ENCODE measurements at regions of chr12 and their contacts with region 1.

Region 1: DNA sequence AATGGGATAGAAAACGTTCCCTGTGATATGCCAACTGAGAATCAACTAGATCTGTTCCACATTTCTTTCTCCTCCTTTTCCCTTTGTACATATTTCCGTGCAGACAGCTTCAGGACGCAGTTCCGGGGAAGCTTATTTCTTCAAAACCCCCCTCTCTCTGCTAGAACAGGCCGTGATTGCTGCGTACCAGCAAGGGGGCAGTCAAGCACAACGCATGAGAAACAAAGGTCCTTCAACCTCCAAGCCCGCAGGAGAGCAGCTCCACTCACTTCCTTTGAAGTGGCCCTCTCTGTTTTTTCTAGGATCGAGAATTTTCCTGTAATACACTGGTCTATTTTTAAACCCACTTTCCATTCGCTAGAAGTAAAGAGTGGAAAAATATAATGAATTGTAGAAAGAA is 80.8 kb downstream of the ZNF664 start:
- DNase-seq: peak in 8 of 10 donors; percentile 38 to 74 (median 59)
- H3K4me3 ChIP-seq: peak overlapping the region in 10 of 59 donors; percentile 0 to 26 (median 4)
- H3K27ac ChIP-seq: peak overlapping the region in 2 of 59 donors; percentile 0 to 31
- H3K27me3 ChIP-seq: no peaks in the 10 kb centered on the region
- CTCF ChIP-seq: peak; percentile 16 to 92 (median 75)

Region 2: DNA sequence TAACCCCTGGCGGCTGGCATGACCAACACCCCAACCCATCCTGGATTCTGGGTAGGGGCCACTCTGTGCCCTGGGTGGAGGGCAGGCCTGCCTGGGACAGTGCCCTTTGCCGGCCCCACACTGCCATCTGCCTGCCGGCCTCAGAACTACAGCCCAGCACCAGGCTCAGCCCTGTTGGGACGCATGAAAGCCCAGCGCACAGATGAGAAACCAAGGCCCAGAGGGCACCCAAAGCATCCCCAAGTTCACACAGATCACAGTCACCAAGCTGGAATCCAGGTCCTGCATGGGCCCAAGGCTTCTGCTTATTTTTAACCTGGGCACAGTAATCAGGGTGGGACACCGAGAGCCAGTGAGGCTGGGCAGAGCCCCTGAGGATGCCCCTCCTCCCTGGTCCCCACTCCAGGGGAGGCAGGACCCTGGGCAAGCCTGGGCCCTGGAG is 267.2 kb after region 1 on chr12:
- intact Hi-C with region 1: loop called (anchors 2 to 5 kb)
- DNase-seq: peak; percentile 64 to 86 (median 74)
- H3K4me3 ChIP-seq: no peak overlapping the region
- H3K27ac ChIP-seq: peak overlapping the region in 9 of 59 donors; percentile 4 to 66 (median 29)
- H3K27me3 ChIP-seq: no peaks in the 10 kb centered on the region
- CTCF ChIP-seq: peak; percentile 75 to 99 (median 98)